ENCODE measurements at regions of chrX and their contacts with region 1.

Region 1: DNA sequence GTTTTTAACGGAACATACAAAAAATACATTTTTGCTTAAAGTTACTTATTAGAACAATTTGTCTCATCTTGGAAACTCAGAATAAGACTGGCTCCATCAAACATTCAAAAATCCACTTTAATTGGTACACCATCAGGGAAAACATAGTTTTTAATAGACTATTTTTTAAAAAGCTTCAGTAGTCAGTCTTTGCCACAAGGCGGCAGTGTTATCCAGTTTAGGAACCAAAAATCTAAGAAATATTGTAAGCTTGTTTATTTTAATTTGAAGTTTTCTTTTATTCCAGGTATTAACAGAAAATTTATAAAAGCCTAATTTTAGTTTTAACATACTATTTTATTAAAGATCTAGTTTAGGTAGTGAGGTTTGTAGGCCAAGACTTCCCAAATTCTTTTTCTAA is 107.7 kb downstream of the APOOL start:
- DNase-seq: peak; percentile 4
- H3K4me3 ChIP-seq: no peak overlapping the region; a peak in 1 of 4 replicates
- H3K27ac ChIP-seq: no peak overlapping the region
- H3K4me1 ChIP-seq: no peaks in the 10 kb centered on the region
- H3K27me3 ChIP-seq: no peaks in the 10 kb centered on the region
- CTCF ChIP-seq: peak; percentile 89
- EP300 ChIP-seq: no peak
- RAD21 ChIP-seq: peak; percentile 69

Region 2: GRCh38 chrX:85052636-85053343 is 58.6 kb before region 1 on chrX:
- CTCF ChIA-PET with region 1: no interaction called
- POLR2A ChIA-PET with region 1: no interaction called
- DNase-seq: no peak
- H3K4me3 ChIP-seq: peak overlapping the region in 1 of 2 experiments; percentile 34; a peak in 1 of 4 replicates
- H3K27ac ChIP-seq: peak overlapping the region in 1 of 2 experiments; percentile 82; a peak in 2 of 4 replicates
- H3K4me1 ChIP-seq: peaks cover 0 to 18% of the 10 kb centered on the region in 2 experiments; a peak in 2 of 4 replicates
- H3K27me3 ChIP-seq: no peaks in the 10 kb centered on the region
- CTCF ChIP-seq: peak; percentile 68
- EP300 ChIP-seq: peak in 1 of 2 experiments; percentile 75; a peak in 2 of 4 replicates
- RAD21 ChIP-seq: peak; percentile 59

Region 3: GRCh38 chrX:85084770-85085393 is 26.5 kb before region 1 on chrX:
- CTCF ChIA-PET with region 1: interaction called, 21 read pairs
- POLR2A ChIA-PET with region 1: no interaction called
- DNase-seq: peak; percentile 50
- H3K4me3 ChIP-seq: no peak overlapping the region
- H3K27ac ChIP-seq: no peak overlapping the region
- H3K4me1 ChIP-seq: no peaks in the 10 kb centered on the region
- H3K27me3 ChIP-seq: no peaks in the 10 kb centered on the region
- CTCF ChIP-seq: peak; percentile 95
- EP300 ChIP-seq: no peak
- RAD21 ChIP-seq: peak; percentile 67

Region 4: DNA sequence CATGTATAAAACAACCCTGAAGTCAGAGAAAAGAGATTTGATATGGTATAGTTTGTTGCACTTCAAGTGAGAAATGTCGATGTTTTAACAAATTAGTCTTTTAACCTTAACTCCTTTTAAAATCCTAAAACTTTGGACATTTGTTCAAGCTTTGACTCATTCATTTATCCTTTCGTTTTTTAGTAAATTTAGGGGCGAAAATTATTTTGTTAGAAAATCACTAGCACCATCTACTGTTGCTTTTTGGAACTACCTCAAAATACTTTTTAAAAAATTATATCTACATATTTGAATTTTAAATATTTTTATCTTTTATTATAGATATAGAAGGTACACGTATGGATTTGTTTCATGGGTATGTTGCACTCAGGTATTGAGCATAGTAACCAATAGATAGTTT is 433.3 kb after region 1 on chrX:
- CTCF ChIA-PET with region 1: interaction called, 20 read pairs
- POLR2A ChIA-PET with region 1: no interaction called
- DNase-seq: no peak
- H3K4me3 ChIP-seq: peak overlapping the region in 1 of 2 experiments; percentile 4; a peak in 1 of 4 replicates
- H3K27ac ChIP-seq: no peak overlapping the region
- H3K4me1 ChIP-seq: no peaks in the 10 kb centered on the region
- H3K27me3 ChIP-seq: no peaks in the 10 kb centered on the region
- CTCF ChIP-seq: peak; percentile 62
- EP300 ChIP-seq: no peak
- RAD21 ChIP-seq: peak; percentile 47; the same call in 1 of the 2 replicates